ENCODE measurements at regions of chr2 and their contacts with region 1.

Region 1: GRCh38 chr2:217650716-217651360 is 352.0 kb downstream of the TNS1 start:
- DNase-seq: peak; percentile 51
- ATAC-seq: peak; percentile 60
- H3K4me3 Mint-ChIP-seq: no peak overlapping the region
- H3K27ac Mint-ChIP-seq: no peak overlapping the region
- H3K4me1 Mint-ChIP-seq: no peaks in the 10 kb centered on the region
- H3K27me3 Mint-ChIP-seq: peaks cover 3% of the 10 kb centered on the region

Region 2: DNA sequence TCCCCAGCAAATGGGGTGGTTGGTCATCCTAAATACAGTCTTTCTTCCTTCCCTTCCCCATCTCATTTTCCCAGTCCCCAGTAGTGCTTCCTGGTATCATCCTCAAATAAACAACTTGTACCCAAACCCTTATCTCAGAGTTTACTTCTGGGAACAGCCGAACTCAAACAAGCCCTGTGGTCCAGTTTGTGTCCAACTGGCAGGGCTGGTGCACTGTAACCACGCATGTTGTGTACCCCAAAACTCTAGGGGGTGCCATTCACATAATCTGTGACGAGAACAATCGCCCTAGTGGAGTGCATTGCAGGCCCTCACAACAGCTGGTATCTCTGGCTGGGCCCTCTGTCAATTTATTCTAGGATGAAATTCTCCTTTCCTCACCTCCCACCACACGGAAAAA is 14.3 kb before region 1 on chr2:
- CTCF ChIA-PET with region 1: interaction called, 20 read pairs
- POLR2A ChIA-PET with region 1: no interaction called
- DNase-seq: no peak
- ATAC-seq: no peak
- H3K4me3 Mint-ChIP-seq: no peak overlapping the region
- H3K27ac Mint-ChIP-seq: no peak overlapping the region
- H3K4me1 Mint-ChIP-seq: no peaks in the 10 kb centered on the region
- H3K27me3 Mint-ChIP-seq: no peaks in the 10 kb centered on the region

Region 3: DNA sequence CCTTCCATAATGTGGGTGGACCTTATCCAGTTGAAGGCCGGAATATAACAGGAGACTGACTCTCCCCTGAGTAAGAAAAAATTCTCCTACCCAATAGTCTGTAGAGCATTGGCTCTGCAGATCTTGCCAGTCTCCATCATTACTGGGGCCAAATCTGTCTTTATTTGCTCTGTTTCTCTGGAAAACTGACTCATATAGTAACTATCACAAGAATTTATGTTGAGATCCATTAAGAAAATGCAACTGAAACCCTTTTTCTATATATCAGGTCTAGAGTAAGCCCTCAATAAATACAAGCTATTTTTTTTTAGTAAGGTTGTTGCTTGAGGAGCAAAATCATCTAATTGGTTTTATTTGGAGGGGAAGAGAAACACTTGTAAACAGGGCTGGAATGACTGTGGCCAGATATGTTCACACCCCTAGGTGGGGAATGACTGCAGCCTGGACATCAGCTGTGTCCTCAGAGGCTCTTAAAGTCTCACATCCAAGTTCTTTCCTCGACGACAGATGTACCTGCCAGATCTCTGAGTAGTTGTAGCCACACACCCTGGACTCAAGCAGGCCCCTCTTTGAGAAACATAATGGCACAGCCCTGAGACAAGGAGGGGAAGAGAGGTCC is 12.3 kb after region 1 on chr2:
- CTCF ChIA-PET with region 1: interaction called, 15 read pairs
- POLR2A ChIA-PET with region 1: no interaction called
- DNase-seq: no peak
- ATAC-seq: no peak
- H3K4me3 Mint-ChIP-seq: no peak overlapping the region
- H3K27ac Mint-ChIP-seq: no peak overlapping the region
- H3K4me1 Mint-ChIP-seq: peaks cover 14% of the 10 kb centered on the region
- H3K27me3 Mint-ChIP-seq: peaks cover 6% of the 10 kb centered on the region

Region 4: DNA sequence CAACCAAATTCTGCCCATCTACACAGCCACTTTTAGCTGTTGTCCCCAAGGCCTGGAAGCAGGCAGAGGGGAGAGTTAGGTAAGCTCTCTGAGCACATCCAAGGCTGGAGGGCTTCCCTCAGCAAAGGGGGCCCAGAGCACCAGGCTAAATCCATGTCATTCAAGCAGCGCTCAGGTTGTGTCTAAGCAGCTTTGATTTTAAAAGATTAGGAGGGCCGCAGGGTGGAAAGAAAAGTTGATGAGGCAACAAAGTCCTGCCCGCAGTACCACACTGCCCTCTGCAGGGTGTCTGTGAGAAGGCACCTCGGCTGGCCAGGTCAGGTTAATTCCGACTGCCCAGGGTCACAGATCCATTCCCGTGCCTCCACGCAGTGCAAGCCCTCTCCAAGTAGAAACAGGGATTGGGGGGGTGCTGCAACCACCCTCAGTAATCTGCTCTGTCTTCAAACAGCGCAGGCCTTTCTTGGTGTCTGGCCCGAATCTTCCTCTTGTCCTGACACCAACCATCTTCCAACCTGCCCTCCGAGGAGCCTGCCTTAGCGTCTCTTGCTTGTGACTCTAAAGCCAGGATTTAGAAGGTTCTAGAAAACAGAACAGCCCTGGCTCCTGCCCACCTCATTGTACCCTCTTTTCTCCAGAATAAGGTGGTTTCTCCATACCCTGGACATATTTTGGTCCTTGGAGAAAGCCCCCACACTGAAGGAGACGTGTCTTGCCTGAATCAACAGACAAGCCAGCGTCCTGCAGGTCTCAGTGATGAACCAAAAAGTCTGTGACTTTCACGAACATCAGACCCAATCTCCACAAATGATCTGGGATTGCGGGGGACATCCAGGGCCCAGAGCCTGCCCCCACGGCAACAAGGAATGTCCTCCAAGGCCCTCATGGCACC is 62.8 kb after region 1 on chr2:
- CTCF ChIA-PET with region 1: interaction called, 28 read pairs
- POLR2A ChIA-PET with region 1: no interaction called
- DNase-seq: peak; percentile 81
- ATAC-seq: peak; percentile 84
- H3K4me3 Mint-ChIP-seq: no peak overlapping the region
- H3K27ac Mint-ChIP-seq: no peak overlapping the region
- H3K4me1 Mint-ChIP-seq: peaks cover 5% of the 10 kb centered on the region
- H3K27me3 Mint-ChIP-seq: peaks cover 3% of the 10 kb centered on the region

Region 5: DNA sequence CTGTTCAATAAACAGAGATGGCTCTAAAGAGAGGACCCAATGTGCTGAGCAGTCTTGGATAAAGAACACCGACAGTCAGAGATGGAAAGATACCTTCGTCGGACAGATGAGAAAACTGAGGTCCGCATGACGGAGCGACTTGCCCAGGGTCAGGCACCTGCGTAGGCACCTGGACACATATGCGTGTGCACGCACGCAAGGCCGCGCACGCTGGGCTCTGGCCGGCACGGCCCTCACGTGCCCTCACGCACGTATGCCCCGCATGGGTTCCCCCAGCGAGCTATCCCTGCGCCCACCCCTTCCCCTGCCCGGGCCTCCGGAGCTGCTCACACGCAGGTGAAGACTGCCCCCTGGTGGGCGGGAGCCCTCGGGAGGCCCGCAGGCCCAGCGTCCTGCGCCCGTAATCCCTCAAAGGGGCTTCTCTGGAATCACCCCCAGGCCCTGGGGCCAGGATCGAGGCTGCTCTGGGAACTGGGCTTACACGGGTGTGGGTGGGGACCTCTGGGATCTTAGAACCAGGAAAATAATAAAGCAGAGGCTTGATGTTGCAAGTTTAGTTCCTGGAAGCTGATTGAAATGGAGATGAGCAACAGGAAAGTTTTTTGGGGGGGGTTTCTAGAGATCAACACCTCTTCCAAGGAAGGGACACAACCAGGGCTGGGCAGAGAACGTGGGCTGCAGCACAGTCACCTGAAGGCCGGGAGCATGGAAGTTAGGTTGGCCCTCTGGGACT is 105.7 kb after region 1 on chr2:
- CTCF ChIA-PET with region 1: interaction called, 26 read pairs
- POLR2A ChIA-PET with region 1: no interaction called
- DNase-seq: peak; percentile 78
- ATAC-seq: peak; percentile 89
- H3K4me3 Mint-ChIP-seq: peak overlapping the region; percentile 36
- H3K27ac Mint-ChIP-seq: peak overlapping the region; percentile 74
- H3K4me1 Mint-ChIP-seq: peaks cover 35% of the 10 kb centered on the region
- H3K27me3 Mint-ChIP-seq: peaks cover 5% of the 10 kb centered on the region

Region 6: GRCh38 chr2:217792626-217793527 is 142.0 kb after region 1 on chr2:
- CTCF ChIA-PET with region 1: no interaction called
- POLR2A ChIA-PET with region 1: no interaction called
- DNase-seq: no peak
- ATAC-seq: no peak
- H3K4me3 Mint-ChIP-seq: no peak overlapping the region
- H3K27ac Mint-ChIP-seq: no peak overlapping the region
- H3K4me1 Mint-ChIP-seq: peaks cover 36% of the 10 kb centered on the region
- H3K27me3 Mint-ChIP-seq: no peaks in the 10 kb centered on the region